Activated naive CD4-positive, alpha-beta T cell treated with anti-CD3 and anti-CD28 coated beads for 36 hours (primary cell): ENCODE measurements at regions of chr11 and their contacts with region 1.

Region 1: DNA sequence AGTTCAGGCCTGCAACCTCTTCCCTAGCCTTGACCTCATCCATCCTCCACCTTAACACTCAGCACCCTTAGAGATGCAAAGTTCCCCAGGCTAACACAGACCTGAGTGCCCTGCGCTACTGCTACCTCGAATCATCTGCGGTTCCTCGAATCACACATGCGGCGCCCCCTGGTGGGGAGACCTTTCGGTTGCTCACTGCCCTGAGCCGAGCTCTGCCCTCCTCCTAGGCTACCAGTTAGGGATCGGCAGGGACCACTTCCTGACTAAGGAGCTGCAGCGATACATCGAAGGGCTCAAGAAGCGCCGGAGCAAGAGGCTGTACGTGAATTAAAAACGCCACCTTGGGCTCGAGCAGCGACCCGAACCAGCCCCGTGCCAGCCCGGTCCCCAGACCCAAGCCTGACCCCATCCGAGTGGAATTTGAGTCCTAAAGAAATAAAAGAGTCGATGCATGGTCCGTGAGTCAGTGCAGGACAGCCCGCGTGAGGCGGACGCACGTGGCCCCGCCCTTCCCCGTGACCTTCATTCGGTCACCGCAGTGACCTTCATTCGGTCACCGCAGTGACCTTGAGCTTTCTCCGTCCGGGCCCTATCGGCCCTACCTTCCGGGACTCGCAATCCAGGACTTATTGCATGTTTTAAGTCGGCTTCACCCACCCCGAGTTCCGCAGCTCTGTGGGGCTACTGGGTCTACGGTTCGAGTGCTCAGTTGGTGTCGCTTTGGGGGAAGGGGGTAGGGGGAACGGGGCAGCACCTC is 830 bp upstream of the ESRRA start:
- DNase-seq: peak; percentile 98
- H3K4me3 Mint-ChIP-seq: peak overlapping the region; percentile 88
- H3K27ac Mint-ChIP-seq: peak overlapping the region; percentile 91
- H3K4me1 Mint-ChIP-seq: peaks cover 39% of the 10 kb centered on the region
- H3K27me3 Mint-ChIP-seq: peaks cover 19% of the 10 kb centered on the region

Region 2: GRCh38 chr11:63974259-63975143 is 330.0 kb before region 1 on chr11 and contains the start of gene COX8A:
- CTCF ChIA-PET with region 1: no interaction called
- intact Hi-C with region 1: loop called (anchors 1 kb)
- DNase-seq: peak; percentile 99
- H3K4me3 Mint-ChIP-seq: peak within 1 kb of the TSS; percentile 95
- H3K27ac Mint-ChIP-seq: peak within 1 kb of the TSS; percentile 98
- H3K4me1 Mint-ChIP-seq: peaks cover 27% of the 10 kb centered on the region
- H3K27me3 Mint-ChIP-seq: no peaks in the 10 kb centered on the region
- total RNA-seq, gene COX8A: 669 to 675 TPM

Region 3: DNA sequence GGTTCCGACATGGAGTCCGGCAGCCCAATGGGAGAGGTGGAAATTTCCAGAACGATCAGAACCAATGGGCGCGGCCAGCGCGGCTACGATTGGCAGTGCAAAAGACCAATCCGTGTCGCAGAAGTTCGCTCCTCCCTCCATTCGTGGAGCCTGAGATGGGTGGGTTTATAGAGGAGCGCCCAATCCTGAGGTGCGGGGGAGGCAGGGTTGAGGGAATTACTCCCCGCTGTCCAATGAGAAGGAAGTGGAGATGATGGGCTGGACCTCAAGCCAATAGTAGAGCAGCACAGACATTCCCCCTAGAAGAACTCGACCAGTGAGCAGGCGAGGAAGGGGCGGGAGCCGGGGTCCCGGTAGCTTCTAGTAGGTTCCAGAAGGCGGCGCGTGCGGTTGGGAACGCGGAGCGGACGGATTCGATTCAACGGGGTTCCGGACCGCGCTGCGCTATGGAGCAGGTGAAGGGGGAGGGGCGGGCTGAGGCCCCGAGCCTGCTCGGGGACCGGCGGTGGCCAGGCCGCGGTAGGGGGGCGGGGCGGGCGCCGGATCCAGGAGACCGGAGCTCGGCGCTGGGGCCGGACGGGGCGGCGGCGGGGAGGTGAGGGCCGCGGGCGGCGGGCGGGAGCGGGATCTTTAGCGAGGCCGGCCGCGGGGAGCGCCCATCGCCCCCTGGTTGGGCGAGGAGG is 118.5 kb before region 1 on chr11 and contains the start of gene STIP1:
- CTCF ChIA-PET with region 1: interaction called, 4 read pairs
- intact Hi-C with region 1: loop called (anchors 1 kb)
- DNase-seq: peak; percentile 99
- H3K4me3 Mint-ChIP-seq: no peak within 1 kb of the TSS
- H3K27ac Mint-ChIP-seq: peak within 1 kb of the TSS; percentile 94
- H3K4me1 Mint-ChIP-seq: peaks cover 54% of the 10 kb centered on the region
- H3K27me3 Mint-ChIP-seq: no peaks in the 10 kb centered on the region
- total RNA-seq, gene STIP1: 264 to 272 TPM

Region 4: GRCh38 chr11:64225612-64226506 is 78.6 kb before region 1 on chr11 and contains the starts of genes NUDT22 and TRPT1:
- CTCF ChIA-PET with region 1: interaction called, 7 read pairs
- intact Hi-C with region 1: loop called (anchors 1 kb)
- DNase-seq: peak; percentile 94
- H3K4me3 Mint-ChIP-seq: peak within 1 kb of the TSS; percentile 87
- H3K27ac Mint-ChIP-seq: peak within 1 kb of the TSS; percentile 90
- H3K4me1 Mint-ChIP-seq: peaks cover 34% of the 10 kb centered on the region
- H3K27me3 Mint-ChIP-seq: no peaks in the 10 kb centered on the region
- total RNA-seq, gene NUDT22: 51.4 to 51.9 TPM
- total RNA-seq, gene TRPT1: 18.2 to 18.3 TPM

Region 5: GRCh38 chr11:64246871-64247728 is 57.4 kb before region 1 on chr11 and contains the start of gene PPP1R14B:
- CTCF ChIA-PET with region 1: interaction called, 27 read pairs
- intact Hi-C with region 1: loop called (anchors 1 kb)
- DNase-seq: peak; percentile 80
- H3K4me3 Mint-ChIP-seq: peak within 1 kb of the TSS; percentile 95
- H3K27ac Mint-ChIP-seq: peak within 1 kb of the TSS; percentile 91
- H3K4me1 Mint-ChIP-seq: peaks cover 29% of the 10 kb centered on the region
- H3K27me3 Mint-ChIP-seq: no peaks in the 10 kb centered on the region
- total RNA-seq, gene PPP1R14B: 216 to 227 TPM

Region 6: DNA sequence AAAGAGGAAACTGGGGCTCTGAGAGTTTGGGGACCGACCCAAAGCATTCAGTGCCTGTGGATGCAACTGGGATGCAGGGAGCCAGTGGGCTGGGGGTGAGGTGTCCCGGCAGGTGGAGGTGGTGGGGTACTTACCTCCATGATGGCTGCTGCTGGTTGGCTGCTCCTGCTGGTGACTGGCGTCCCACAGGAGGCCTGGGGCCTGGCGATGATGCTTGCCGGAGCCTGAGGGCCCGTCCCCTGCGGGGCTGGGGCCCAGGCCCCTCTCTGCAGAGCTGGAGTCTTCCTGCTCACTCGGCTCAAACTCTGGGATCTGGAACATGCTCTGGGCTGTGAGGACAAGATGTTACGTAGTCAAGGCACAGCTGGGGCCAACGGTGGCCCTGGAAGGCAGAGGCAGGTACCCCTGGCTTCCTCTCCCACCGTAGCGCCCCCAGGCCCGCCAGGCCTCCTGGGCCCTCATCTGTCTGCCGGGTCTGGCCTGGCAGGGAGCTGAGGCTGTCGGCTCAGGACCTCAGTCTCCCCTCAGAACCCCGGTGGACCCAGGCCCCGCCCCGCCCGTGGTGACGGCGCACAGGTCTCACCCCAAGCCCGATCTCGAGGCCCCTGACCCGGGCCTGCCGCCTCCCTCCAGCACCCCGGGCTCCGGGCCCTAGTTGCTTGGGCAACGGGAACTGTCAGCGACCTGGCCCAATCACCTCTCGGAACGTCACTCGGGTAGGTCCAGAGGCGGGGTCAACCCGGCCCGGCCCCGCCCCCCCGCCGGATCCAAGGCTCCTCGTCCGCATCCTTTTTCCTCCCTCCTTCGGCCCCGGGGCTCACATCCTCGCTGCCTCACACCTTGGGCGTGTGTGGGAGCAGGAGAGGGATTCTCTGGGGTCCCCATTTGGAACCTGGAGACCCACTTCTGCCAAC is 20.2 kb before region 1 on chr11 and contains the start of gene BAD:
- CTCF ChIA-PET with region 1: interaction called, 12 read pairs
- intact Hi-C with region 1: loop called (anchors 1 kb)
- DNase-seq: peak; percentile 95
- H3K4me3 Mint-ChIP-seq: peak within 1 kb of the TSS; percentile 82
- H3K27ac Mint-ChIP-seq: peak within 1 kb of the TSS; percentile 90
- H3K4me1 Mint-ChIP-seq: peaks cover 17% of the 10 kb centered on the region
- H3K27me3 Mint-ChIP-seq: no peaks in the 10 kb centered on the region
- total RNA-seq, gene BAD: 12.8 to 14.3 TPM

Region 7: DNA sequence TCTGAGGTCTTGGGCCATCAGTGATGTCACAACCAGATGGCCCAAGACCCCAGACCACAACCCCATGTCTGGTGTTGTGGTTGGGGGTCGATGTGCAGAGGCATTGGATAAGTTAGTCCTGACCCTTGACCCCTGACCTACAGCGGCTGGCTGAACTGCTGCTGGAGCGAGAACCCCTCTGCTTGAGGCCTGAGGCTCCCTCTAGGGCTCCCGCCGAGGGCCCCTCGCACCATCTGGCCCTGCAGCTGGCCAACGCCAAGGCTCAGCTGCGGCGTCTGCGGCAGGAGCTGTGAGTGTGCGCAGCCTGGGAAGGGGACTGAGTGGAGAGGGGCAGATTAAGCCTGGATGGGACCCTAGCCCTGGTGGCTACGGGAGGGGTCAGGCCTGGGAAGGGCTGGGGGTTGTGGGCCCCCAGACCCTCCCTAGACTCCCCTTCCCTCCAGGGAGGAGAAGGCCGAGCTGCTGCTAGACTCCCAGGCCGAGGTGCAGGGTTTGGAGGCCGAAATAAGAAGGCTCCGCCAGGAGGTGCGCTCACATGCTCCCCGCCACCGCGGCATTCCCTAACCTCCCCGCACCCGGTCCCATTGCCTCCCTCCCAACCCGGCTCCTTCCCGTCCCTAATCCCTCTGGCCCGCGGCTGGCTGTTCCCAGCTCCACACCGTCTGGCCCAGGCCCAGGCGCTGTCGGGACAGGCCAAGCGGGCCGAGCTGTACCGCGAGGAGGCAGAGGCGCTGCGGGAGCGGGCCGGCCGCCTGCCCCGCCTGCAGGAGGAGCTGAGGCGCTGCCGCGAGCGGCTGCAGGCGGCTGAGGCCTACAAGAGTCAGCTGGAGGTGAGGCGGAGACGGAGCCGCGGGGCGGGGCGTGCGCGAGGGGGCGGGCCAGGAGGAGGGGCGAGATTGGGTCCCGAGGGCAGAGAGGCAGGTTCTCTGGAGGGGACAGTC is 37.6 kb after region 1 on chr11:
- CTCF ChIA-PET with region 1: interaction called, 3 read pairs
- intact Hi-C with region 1: loop called (anchors 1 kb)
- DNase-seq: peak; percentile 95
- H3K4me3 Mint-ChIP-seq: peak overlapping the region; percentile 18
- H3K27ac Mint-ChIP-seq: no peak overlapping the region
- H3K4me1 Mint-ChIP-seq: peaks cover 34% of the 10 kb centered on the region
- H3K27me3 Mint-ChIP-seq: no peaks in the 10 kb centered on the region